ENCODE measurements at regions of chr11 and their contacts with region 1.

Region 1: GRCh38 chr11:47241841-47242301 is 6.7 kb downstream of the ACP2 start:
- DNase-seq: no peak
- H3K4me3 ChIP-seq: no peak overlapping the region
- H3K27ac ChIP-seq: no peak overlapping the region
- H3K4me1 ChIP-seq: no peaks in the 10 kb centered on the region
- H3K27me3 ChIP-seq: no peaks in the 10 kb centered on the region
- CTCF ChIP-seq: no peak
- EP300 ChIP-seq: no peak
- POLR2A ChIP-seq: peak in 1 of 2 experiments; percentile 49; a peak in 2 of 3 replicates
- RAD21 ChIP-seq: no peak

Region 2: GRCh38 chr11:47213985-47214564 is 27.8 kb before region 1 on chr11:
- CTCF ChIA-PET with region 1: interaction called, 3 read pairs
- POLR2A ChIA-PET with region 1: interaction called, 23 read pairs
- DNase-seq: peak; percentile 69 to 88
- H3K4me3 ChIP-seq: peak overlapping the region; percentile 65 to 98 (median 75)
- H3K27ac ChIP-seq: peak overlapping the region; percentile 86
- H3K4me1 ChIP-seq: peaks cover 0 to 10% (median 8%) of the 10 kb centered on the region in 4 experiments; a peak in 6 of 7 replicates
- H3K27me3 ChIP-seq: no peaks in the 10 kb centered on the region
- CTCF ChIP-seq: no peak
- EP300 ChIP-seq: no peak
- POLR2A ChIP-seq: peak; percentile 75
- RAD21 ChIP-seq: no peak